Heart left ventricle (tissue), 16 donors: ENCODE measurements at regions of chr16 and their contacts with region 1.

Region 1: GRCh38 chr16:87062569-87063442 is 254.4 kb downstream of the C16orf95 start:
- DNase-seq: peak; percentile 66 to 82 (median 74)
- ATAC-seq: peak; percentile 88 to 93 (median 91)
- H3K4me3 ChIP-seq: peak overlapping the region in 6 of 12 donors; percentile 6 to 47 (median 22)
- H3K27ac ChIP-seq: no peak overlapping the region
- H3K4me1 ChIP-seq: peaks cover 0 to 7% (median 0%) of the 10 kb centered on the region in 12 donors
- H3K27me3 ChIP-seq: peaks cover 0 to 17% (median 7%) of the 10 kb centered on the region in 9 donors
- CTCF ChIP-seq: peak; percentile 70 to 85 (median 80)
- POLR2A ChIP-seq: no peak

Region 2: GRCh38 chr16:86570558-86571529 is 492.0 kb before region 1 on chr16:
- intact Hi-C with region 1: loop called in 3 of 10 experiments (anchors 5 kb)
- DNase-seq: no peak
- ATAC-seq: no peak
- H3K4me3 ChIP-seq: peak overlapping the region; percentile 14 to 83 (median 58)
- H3K27ac ChIP-seq: peak overlapping the region in 11 of 12 donors; percentile 11 to 89 (median 64)
- H3K4me1 ChIP-seq: peaks cover 0 to 44% (median 11%) of the 10 kb centered on the region in 12 donors
- H3K27me3 ChIP-seq: peaks cover 19 to 100% (median 71%) of the 10 kb centered on the region in 9 donors
- CTCF ChIP-seq: no peak
- POLR2A ChIP-seq: no peak

Region 3: GRCh38 chr16:86761111-86762031 is 301.4 kb before region 1 on chr16:
- intact Hi-C with region 1: loop called in 2 of 10 experiments (anchors 5 to 10 kb)
- DNase-seq: peak; percentile 53 to 80 (median 64)
- ATAC-seq: peak; percentile 50 to 87 (median 79)
- H3K4me3 ChIP-seq: peak overlapping the region in 6 of 12 donors; percentile 5 to 42 (median 30)
- H3K27ac ChIP-seq: no peak overlapping the region
- H3K4me1 ChIP-seq: peaks cover 0 to 20% (median 4%) of the 10 kb centered on the region in 12 donors
- H3K27me3 ChIP-seq: peaks cover 0 to 65% (median 20%) of the 10 kb centered on the region in 9 donors
- CTCF ChIP-seq: peak; percentile 64 to 92 (median 76)
- POLR2A ChIP-seq: no peak

Region 4: GRCh38 chr16:86834451-86835035 is 228.3 kb before region 1 on chr16:
- intact Hi-C with region 1: loop called in 1 of 10 experiments (anchors 10 kb)
- DNase-seq: peak in 1 of 5 donors; percentile 44
- ATAC-seq: peak in 2 of 4 donors; percentile 17 to 35
- H3K4me3 ChIP-seq: no peak overlapping the region
- H3K27ac ChIP-seq: no peak overlapping the region
- H3K4me1 ChIP-seq: peaks cover 0 to 11% (median 3%) of the 10 kb centered on the region in 12 donors
- H3K27me3 ChIP-seq: no peaks in the 10 kb centered on the region
- CTCF ChIP-seq: peak in 3 of 12 donors; percentile 18 to 30 (median 22)
- POLR2A ChIP-seq: no peak

Region 5: DNA sequence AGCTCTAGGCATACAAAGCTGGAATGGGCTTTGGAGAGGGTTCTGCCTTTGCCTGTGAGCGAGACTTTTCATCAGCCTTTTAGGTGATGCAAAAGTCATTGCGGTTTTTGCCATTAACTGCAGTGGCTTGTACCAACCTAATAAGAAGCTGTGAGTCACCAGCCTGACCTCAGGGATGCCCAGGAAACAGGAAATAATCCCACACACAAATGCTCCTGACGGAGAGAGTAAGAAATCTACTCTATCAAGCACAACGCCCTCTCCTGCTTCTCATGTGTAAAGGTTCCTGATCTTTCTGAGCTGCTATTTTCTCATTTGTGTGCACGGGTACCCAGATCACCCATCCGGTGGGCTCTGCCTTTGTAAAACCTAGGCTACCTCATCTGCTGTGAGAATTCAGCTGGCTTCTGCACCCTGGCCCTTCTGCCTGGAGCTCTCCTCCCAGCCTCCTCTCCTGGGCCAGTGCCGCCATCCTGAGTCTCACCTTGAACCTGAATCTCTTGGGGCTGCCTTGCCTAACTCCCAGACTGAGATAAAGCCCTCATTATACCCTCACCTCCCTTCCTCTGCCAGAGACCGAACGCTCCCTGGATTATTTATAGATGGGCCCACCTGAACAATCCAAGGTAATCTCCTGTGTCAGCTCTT is 45.3 kb before region 1 on chr16:
- intact Hi-C with region 1: no loop called
- DNase-seq: no peak
- ATAC-seq: no peak
- H3K4me3 ChIP-seq: no peak overlapping the region
- H3K27ac ChIP-seq: no peak overlapping the region
- H3K4me1 ChIP-seq: peaks cover 0 to 8% (median 0%) of the 10 kb centered on the region in 12 donors
- H3K27me3 ChIP-seq: peaks cover 0 to 9% (median 0%) of the 10 kb centered on the region in 9 donors
- CTCF ChIP-seq: no peak
- POLR2A ChIP-seq: no peak

Region 6: GRCh38 chr16:87101903-87102302 is 39.1 kb after region 1 on chr16:
- intact Hi-C with region 1: no loop called
- DNase-seq: no peak
- ATAC-seq: peak in 1 of 4 donors; percentile 64
- H3K4me3 ChIP-seq: no peak overlapping the region
- H3K27ac ChIP-seq: no peak overlapping the region
- H3K4me1 ChIP-seq: peaks cover 0 to 3% (median 0%) of the 10 kb centered on the region in 12 donors
- H3K27me3 ChIP-seq: peaks cover 0 to 19% (median 0%) of the 10 kb centered on the region in 9 donors
- CTCF ChIP-seq: no peak
- POLR2A ChIP-seq: no peak

Region 7: GRCh38 chr16:87278191-87279095 is 215.6 kb after region 1 on chr16:
- intact Hi-C with region 1: loop called (anchors 2 to 10 kb)
- DNase-seq: peak; percentile 67 to 85 (median 75)
- ATAC-seq: peak; percentile 89 to 97 (median 94)
- H3K4me3 ChIP-seq: no peak overlapping the region
- H3K27ac ChIP-seq: no peak overlapping the region
- H3K4me1 ChIP-seq: peaks cover 0 to 3% (median 0%) of the 10 kb centered on the region in 12 donors
- H3K27me3 ChIP-seq: peaks cover 0 to 12% (median 0%) of the 10 kb centered on the region in 9 donors
- CTCF ChIP-seq: peak; percentile 68 to 93 (median 86)
- POLR2A ChIP-seq: no peak